ENCODE measurements at regions of chr16 and their contacts with region 1.

Region 1: DNA sequence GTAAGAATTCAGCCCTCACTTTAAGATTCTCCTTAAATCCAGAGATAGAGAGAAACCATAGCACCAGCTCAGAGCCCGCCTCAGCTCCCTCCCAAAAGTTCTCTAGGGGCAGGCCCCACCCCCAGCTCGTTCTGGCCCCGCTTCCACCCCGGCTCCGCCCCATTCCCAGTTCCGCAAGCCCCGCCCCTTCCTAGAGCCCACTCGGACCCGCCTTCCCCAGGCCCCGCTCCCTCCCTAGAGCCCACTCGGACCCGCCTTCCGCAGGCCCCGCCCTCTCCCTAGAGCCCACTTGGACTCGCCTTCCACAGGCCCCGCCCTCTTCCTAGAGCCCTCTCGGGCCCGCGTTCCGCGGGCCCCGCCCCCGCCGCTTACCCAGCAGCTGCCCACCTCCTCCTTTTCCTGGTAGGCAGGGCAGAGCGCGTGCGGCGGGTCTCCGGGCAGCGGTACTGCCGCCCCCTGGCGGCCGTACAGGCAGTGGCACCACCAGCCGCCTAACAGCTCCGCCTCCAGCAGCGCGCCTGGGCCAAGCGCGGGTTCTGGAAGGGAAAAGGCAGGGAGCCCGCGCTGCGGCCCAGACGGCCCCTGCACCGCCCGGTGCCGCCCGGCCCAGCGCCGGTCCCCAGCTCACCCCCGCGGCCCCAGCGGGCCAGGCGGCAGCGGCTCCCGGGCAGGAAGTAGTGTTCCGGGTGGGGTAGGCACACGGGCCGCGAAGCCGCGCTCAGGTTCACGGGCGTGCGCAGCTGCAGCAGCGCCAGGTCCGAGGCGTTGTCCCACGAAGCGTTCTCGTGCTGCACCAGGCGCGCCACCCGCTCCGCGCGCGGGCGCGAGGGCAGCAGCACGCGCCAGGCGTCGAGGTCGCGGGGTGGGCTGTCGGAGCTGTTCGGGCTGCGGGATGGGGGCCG is 6.8 kb upstream of the PRSS8 start:
- DNase-seq: peak; percentile 99
- H3K4me3 ChIP-seq: peak overlapping the region; percentile 30 to 51
- H3K27ac ChIP-seq: peak overlapping the region; percentile 80 to 82
- H3K4me1 ChIP-seq: peaks cover 7% of the 10 kb centered on the region
- H3K27me3 ChIP-seq: no peaks in the 10 kb centered on the region
- CTCF ChIP-seq: peak; percentile 97 to 100 (median 100)
- POLR2A ChIP-seq: peak; percentile 61

Region 2: DNA sequence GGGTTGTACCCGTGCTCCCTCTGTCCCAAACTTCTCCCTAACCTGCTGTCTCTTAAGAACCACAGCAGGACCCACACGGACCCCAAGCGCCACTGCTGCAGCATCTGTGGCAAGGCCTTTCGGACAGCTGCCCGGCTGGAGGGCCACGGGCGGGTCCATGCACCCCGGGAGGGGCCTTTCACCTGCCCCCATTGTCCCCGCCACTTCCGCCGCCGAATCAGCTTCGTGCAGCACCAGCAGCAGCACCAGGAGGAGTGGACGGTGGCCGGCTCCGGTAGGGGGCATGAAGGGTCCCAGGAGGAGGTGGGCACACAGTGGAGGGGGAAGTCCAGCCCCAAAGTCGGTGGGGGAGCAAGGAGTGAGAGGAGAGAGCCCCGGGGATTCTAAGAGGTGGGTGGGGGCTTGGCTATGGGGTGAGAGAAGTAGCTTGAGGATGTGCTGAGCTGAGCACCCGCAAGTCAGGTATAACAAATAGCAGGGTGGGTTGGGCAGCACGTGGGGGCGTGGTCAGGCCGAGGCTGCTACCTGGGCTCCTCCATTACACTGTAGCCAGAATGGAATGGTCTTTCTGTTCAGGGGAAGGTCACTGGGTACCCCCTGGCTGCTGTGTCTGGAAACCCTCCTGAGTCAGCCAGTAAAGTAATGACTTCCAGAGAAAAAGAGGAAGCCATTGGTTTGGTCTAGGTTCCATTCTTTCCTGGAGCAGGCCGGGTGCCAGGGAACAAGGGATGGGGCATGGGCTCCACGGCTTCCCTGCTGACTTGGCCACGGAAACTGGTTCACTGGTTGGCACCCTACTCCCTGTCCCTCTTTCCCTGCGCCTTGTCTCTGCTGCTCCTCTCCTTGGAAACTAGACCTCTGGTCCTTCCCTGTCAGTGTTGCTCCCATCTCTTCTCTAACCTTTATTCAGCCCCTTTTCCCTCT is 60.7 kb before region 1 on chr16:
- intact Hi-C with region 1: no loop called
- DNase-seq: no peak
- H3K4me3 ChIP-seq: no peak overlapping the region
- H3K27ac ChIP-seq: no peak overlapping the region
- H3K4me1 ChIP-seq: no peaks in the 10 kb centered on the region
- H3K27me3 ChIP-seq: no peaks in the 10 kb centered on the region
- CTCF ChIP-seq: no peak
- POLR2A ChIP-seq: no peak

Region 3: DNA sequence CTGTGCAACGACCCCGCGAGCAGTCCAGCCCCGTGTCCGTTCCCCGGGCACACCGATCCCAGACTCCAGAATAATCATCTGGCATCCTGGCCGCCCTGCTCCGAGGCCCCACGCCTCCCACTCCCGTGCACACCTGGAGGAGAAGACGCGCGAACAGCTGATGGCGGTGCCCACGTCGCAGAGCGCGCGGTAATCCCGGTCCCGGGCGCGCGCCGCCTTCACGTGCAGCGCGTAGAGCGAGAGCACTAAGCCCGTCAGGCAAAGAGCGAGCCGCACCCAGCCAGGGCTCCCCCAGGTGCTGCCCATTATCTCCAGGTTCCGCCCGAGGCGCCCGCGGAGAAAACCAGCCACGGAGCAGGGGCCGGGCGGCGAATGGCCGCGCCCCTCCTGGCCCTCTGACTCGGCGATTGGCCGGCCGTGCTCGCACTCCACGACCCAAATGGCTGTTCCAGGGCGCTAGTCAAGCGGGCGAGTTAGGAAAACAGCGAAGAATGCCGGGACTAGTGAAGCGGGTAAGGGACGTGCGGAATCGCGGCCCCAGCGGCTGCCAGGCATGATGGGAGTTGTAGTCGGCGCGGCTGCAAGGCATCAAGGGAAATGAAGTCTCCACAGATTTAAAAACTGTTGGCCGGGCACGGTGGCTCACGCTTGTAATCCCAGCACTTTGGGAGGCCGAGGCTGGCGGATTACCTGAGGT is 47.8 kb before region 1 on chr16 and contains the start of gene VKORC1:
- intact Hi-C with region 1: loop called (anchors 5 kb)
- DNase-seq: peak; percentile 96
- H3K4me3 ChIP-seq: peak within 1 kb of the TSS; percentile 58 to 60
- H3K27ac ChIP-seq: peak within 1 kb of the TSS; percentile 82
- H3K4me1 ChIP-seq: no peaks in the 10 kb centered on the region
- H3K27me3 ChIP-seq: no peaks in the 10 kb centered on the region
- CTCF ChIP-seq: peak in 2 of 4 experiments; percentile 34 to 46
- POLR2A ChIP-seq: peak; percentile 81
- total RNA-seq, gene VKORC1: 106 to 175 TPM

Region 4: GRCh38 chr16:31108035-31108793 is 34.1 kb before region 1 on chr16 and contains the start of gene BCKDK:
- intact Hi-C with region 1: loop called (anchors 5 kb)
- DNase-seq: peak; percentile 39
- H3K4me3 ChIP-seq: peak within 1 kb of the TSS; percentile 97 to 98
- H3K27ac ChIP-seq: peak within 1 kb of the TSS; percentile 88 to 93
- H3K4me1 ChIP-seq: peaks cover 7% of the 10 kb centered on the region
- H3K27me3 ChIP-seq: no peaks in the 10 kb centered on the region
- CTCF ChIP-seq: peak in 1 of 4 experiments; percentile 12
- POLR2A ChIP-seq: peak; percentile 54
- total RNA-seq, gene BCKDK: 78.5 to 80.6 TPM

Region 5: DNA sequence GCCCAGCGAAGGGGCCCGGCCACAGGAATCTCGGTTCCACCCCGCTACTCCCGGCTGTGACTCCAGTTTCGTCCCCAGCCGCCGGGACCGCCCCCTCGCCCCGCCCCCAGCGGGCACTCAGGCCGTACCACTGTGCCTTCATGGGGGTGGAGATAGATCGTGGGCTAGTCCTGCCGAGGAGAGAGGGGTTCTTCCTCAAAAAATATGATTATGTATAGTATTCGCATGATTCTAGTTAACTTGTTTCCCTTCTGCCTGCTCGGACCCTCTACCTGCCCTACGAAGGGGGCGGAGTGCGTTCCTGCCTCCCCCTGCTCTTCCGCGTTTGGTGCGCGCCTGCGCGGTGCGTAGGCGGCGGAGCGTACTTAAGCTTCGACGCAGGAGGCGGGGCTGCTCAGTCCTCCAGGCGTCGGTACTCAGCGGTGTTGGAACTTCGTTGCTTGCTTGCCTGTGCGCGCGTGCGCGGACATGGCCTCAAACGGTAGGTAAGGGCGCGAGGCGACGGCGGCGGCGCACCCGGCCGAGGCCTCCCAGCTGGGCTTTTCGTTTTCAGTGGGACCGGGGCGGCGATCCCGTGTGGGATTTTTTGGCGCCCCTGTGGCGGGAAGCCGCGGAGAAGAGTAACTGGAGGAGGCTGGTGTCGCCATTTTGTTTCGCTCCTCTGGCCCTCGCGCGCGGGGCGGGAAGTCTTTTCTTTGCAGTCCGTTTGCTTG is 37.5 kb after region 1 on chr16 and contains the start of gene FUS:
- intact Hi-C with region 1: loop called (anchors 1 kb)
- DNase-seq: peak; percentile 90
- H3K4me3 ChIP-seq: peak within 1 kb of the TSS; percentile 95 to 99
- H3K27ac ChIP-seq: peak within 1 kb of the TSS; percentile 98
- H3K4me1 ChIP-seq: peaks cover 18% of the 10 kb centered on the region
- H3K27me3 ChIP-seq: no peaks in the 10 kb centered on the region
- CTCF ChIP-seq: peak in 1 of 4 experiments; percentile 4
- POLR2A ChIP-seq: peak; percentile 91
- total RNA-seq, gene FUS: 48.6 to 87.5 TPM

Measured in prostate gland (tissue), 2 donors.